CD8-positive, alpha-beta memory T cell (primary cell): ENCODE measurements at regions of chr4 and their contacts with region 1.

Region 1: GRCh38 chr4:109559983-109560686 is at the start of gene MCUB:
- DNase-seq: peak; percentile 86 to 95 (median 92)
- H3K4me3 ChIP-seq: peak within 1 kb of the TSS; percentile 88
- H3K4me3 Mint-ChIP-seq: peak within 1 kb of the TSS; percentile 92 to 98 (median 96)
- H3K27ac ChIP-seq: peak within 1 kb of the TSS; percentile 92
- H3K27ac Mint-ChIP-seq: peak within 1 kb of the TSS; percentile 91 to 99 (median 97)
- H3K4me1 ChIP-seq: peaks cover 50% of the 10 kb centered on the region
- H3K4me1 Mint-ChIP-seq: peaks cover 56 to 68% (median 61%) of the 10 kb centered on the region in 3 donors
- H3K27me3 ChIP-seq: no peaks in the 10 kb centered on the region
- H3K27me3 Mint-ChIP-seq: peaks cover 0 to 3% of the 10 kb centered on the region in 2 donors
- total RNA-seq, gene MCUB: 68.7 to 71.6 TPM

Region 2: DNA sequence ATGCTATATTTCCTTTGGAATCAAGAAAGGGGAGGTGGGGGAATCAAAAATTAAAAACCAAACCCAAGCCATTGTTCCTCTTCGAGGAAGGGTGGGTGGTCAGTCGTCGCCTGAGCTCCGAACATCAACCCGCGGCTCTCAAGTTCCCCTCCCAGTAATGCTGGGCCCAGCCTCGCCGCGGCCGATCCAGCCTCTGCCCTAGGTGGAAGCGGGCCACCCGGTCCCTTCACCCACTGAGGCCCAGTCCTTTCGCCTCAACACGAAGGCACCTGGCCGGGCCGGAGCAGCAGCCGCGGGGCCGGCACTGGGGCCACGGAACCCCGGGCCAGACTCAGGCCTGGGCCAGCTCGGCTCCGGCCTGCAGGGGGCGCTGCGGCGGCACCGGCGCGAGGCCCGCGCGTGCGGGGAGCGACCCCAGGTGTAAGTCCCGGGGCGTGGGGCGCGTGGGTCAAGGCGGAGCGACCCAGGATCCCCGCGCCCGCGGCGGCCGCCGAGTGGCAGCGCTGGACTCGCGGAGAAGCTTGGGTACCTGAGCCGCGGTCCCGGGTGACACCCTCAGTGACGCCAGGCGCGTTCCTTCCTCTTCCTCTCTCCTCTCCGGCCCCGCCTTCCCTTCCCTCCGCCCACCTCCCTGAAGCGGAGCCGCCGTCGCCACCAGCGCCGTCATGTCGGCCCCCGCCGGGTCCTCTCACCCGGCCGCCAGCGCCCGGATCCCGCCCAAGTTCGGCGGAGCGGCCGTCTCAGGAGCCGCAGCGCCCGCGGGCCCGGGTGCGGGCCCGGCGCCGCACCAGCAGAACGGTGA is 126.7 kb before region 1 on chr4 and contains the start of gene SEC24B:
- CTCF ChIA-PET with region 1: interaction called, 14 read pairs
- POLR2A ChIA-PET with region 1: interaction called, 8 read pairs
- DNase-seq: peak; percentile 87 to 92 (median 90)
- H3K4me3 ChIP-seq: peak within 1 kb of the TSS; percentile 83
- H3K4me3 Mint-ChIP-seq: peak within 1 kb of the TSS; percentile 87 to 96 (median 90)
- H3K27ac ChIP-seq: peak within 1 kb of the TSS; percentile 73
- H3K27ac Mint-ChIP-seq: peak within 1 kb of the TSS; percentile 91 to 97 (median 94)
- H3K4me1 ChIP-seq: peaks cover 51% of the 10 kb centered on the region
- H3K4me1 Mint-ChIP-seq: peaks cover 47 to 55% (median 54%) of the 10 kb centered on the region in 3 donors
- H3K27me3 ChIP-seq: no peaks in the 10 kb centered on the region
- H3K27me3 Mint-ChIP-seq: peaks cover 0 to 2% of the 10 kb centered on the region in 2 donors
- total RNA-seq, gene SEC24B: 27.7 to 29.5 TPM

Region 3: DNA sequence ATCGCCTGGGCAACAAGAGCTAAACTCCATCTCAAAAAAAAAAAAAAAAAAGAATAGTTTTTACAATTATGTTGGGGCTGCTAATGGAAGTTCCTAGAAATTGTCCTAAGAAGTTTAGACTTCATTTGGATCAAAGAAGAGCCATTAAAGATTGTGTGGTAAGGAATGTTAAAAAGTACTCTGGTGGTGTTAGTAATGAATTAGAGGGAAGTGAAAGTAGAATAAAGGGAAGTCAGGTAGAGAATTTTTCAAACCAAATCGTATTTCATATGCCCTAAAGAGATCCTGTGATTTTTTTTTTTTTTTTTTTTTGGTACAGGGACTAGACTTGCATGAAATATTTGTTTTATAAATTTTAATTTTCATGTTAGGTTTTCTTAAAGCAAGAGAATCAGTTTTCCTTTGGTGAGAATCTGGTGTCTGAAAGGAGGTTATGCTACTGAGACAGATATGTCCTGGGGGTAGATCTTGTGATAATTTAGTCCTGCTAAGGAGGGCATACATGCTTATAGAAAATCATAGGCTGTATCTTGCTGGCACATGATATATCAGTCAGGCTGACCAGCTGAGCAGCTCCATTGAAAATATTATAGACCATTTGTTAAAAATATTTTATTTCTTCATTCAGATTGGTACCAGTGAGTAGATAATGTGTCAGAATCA is 115.8 kb before region 1 on chr4:
- CTCF ChIA-PET with region 1: no interaction called
- POLR2A ChIA-PET with region 1: no interaction called
- DNase-seq: no peak
- H3K4me3 ChIP-seq: no peak overlapping the region
- H3K4me3 Mint-ChIP-seq: peak overlapping the region in 3 of 7 donors; percentile 3 to 6 (median 3)
- H3K27ac ChIP-seq: no peak overlapping the region
- H3K27ac Mint-ChIP-seq: peak overlapping the region in 2 of 8 donors; percentile 49 to 80
- H3K4me1 ChIP-seq: peaks cover 36% of the 10 kb centered on the region
- H3K4me1 Mint-ChIP-seq: peaks cover 60 to 85% (median 83%) of the 10 kb centered on the region in 3 donors
- H3K27me3 ChIP-seq: no peaks in the 10 kb centered on the region
- H3K27me3 Mint-ChIP-seq: no peaks in the 10 kb centered on the region

Region 4: DNA sequence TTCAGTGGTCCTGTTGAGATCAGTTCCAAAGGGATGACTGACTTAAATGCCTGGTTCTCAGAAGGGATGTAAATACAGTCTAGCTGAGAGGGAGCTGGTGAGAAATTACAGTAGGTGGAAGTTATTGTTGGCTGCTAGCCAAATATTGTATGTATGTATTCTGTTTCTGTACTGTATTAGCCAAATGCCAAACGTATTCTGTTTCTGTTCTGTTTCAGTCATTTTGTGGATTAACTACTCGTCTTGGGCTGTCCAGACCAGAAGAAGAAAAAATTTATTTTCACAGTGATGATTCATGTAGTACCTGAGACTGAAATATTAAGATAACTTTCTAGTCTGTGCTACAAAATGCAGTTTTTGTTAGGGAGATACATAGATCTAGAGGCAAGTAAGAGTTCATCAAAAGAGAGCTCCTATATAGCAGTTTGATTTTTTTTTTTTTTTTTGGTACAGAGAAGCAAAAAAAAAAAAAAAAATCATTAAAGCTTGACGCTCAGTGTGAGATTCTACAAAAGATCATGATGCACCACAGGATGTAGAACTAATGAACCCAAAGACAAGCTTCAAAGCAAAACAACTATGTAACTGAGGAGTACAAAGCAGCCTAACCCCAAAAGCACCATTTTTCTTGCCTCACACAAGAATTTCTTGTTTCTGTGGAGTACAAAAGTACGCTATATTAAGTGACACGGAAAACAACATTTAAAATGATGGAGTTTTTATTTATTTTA is 88.3 kb after region 1 on chr4:
- CTCF ChIA-PET with region 1: interaction called, 4 read pairs
- POLR2A ChIA-PET with region 1: interaction called, 49 read pairs
- DNase-seq: peak in 2 of 5 donors; percentile 75 to 84
- H3K4me3 ChIP-seq: peak overlapping the region; percentile 50
- H3K4me3 Mint-ChIP-seq: peak overlapping the region; percentile 40 to 86 (median 66)
- H3K27ac ChIP-seq: peak overlapping the region; percentile 32
- H3K27ac Mint-ChIP-seq: peak overlapping the region in 7 of 8 donors; percentile 83 to 96 (median 89)
- H3K4me1 ChIP-seq: peaks cover 80% of the 10 kb centered on the region
- H3K4me1 Mint-ChIP-seq: peaks cover 0 to 37% (median 17%) of the 10 kb centered on the region in 3 donors
- H3K27me3 ChIP-seq: no peaks in the 10 kb centered on the region
- H3K27me3 Mint-ChIP-seq: no peaks in the 10 kb centered on the region

Region 5: GRCh38 chr4:109671350-109671749 is 111.2 kb after region 1 on chr4:
- CTCF ChIA-PET with region 1: no interaction called
- POLR2A ChIA-PET with region 1: no interaction called
- DNase-seq: no peak
- H3K4me3 ChIP-seq: no peak overlapping the region
- H3K4me3 Mint-ChIP-seq: no peak overlapping the region
- H3K27ac ChIP-seq: no peak overlapping the region
- H3K27ac Mint-ChIP-seq: peak overlapping the region in 2 of 8 donors; percentile 35 to 44
- H3K4me1 ChIP-seq: peaks cover 25% of the 10 kb centered on the region
- H3K4me1 Mint-ChIP-seq: peaks cover 44 to 73% (median 50%) of the 10 kb centered on the region in 3 donors
- H3K27me3 ChIP-seq: no peaks in the 10 kb centered on the region
- H3K27me3 Mint-ChIP-seq: no peaks in the 10 kb centered on the region

Region 6: DNA sequence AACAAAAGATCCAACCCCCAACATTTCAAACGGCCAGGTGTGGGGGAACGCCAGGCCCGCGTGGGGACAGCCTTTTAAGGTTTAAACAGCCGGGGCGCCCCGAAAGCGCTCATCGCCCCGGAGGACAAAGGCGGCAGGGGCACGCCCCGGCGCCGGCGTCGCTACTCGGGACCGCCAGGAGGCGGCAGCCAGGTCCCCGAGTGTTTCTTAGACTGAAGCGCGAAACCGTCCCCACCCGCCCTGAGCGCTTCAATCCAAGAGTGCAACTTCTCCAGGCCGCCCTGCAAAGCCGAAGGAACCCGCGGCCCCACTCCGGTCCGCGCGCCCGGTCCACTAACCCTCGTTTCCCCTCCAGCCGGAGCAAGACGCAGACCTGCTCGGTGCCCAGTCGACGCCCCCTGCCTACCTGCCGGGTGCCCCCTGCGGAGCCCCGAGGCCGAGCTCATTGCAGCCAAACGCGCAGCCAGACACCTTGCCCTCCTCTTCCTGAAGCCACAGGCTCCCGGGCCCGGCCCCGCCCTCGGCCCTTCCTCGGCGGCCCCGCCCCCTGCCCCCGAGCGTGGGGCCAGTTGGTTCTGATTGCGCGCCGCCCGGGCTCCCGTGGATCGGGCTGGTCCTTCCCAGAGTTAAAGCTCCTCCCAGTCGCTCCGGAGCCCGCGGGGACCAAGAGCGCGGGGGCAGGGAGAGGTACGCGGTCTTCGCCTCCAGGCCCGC is 143.0 kb after region 1 on chr4 and contains the start of gene CASP6:
- CTCF ChIA-PET with region 1: interaction called, 6 read pairs
- POLR2A ChIA-PET with region 1: interaction called, 16 read pairs
- DNase-seq: peak; percentile 64 to 80 (median 73)
- H3K4me3 ChIP-seq: peak within 1 kb of the TSS; percentile 76
- H3K4me3 Mint-ChIP-seq: peak within 1 kb of the TSS; percentile 87 to 96 (median 93)
- H3K27ac ChIP-seq: peak within 1 kb of the TSS; percentile 69
- H3K27ac Mint-ChIP-seq: peak within 1 kb of the TSS; percentile 75 to 96 (median 90)
- H3K4me1 ChIP-seq: peaks cover 24% of the 10 kb centered on the region
- H3K4me1 Mint-ChIP-seq: peaks cover 37 to 49% (median 46%) of the 10 kb centered on the region in 3 donors
- H3K27me3 ChIP-seq: no peaks in the 10 kb centered on the region
- H3K27me3 Mint-ChIP-seq: no peaks in the 10 kb centered on the region
- total RNA-seq, gene CASP6: 14.9 to 15.4 TPM